ENCODE measurements at regions of chr10 and their contacts with region 1.

Region 1: DNA sequence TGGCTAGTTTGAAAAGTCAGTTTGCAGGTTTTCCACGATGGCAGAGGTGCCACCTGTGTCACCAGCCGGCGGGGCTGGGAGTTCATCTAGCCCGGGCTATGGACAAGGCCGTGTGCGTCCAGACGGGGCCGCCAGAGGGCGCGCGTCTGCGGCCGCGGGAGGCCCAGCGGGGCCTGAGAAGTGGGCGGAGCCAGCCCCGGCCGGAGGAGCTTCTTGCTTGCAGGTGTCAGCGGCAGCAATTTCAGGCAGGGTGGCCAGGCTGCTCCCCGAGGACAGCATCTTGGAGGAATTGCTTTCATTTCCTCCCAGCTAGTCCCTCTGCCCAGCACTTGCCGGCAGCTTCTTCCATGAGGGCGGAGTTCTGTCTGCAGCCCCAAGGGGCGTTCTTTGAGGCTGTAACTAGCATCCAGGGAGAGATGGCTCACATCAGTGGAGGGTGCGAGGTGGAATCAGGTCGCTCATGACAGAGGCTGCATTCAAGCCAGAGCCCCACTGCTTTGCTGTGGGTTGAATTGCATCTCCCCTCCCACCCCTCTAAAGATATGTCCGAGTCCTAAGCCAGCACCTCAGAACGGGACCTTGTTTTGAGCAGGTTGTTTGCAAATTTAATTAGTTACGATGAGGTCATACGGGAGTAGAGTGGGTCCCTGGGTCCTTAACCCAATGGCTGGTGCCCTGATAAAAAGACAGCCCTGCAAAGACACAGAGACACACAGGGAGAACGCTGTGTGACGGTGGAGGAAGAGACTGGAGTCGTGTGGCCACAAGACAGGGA is 85.9 kb upstream of the MKI67 start:
- DNase-seq: peak; percentile 75 to 85 (median 78)
- H3K4me3 ChIP-seq: peak overlapping the region; percentile 47
- H3K4me3 Mint-ChIP-seq: peak overlapping the region; percentile 85 to 93 (median 89)
- H3K27ac ChIP-seq: no peak overlapping the region
- H3K27ac Mint-ChIP-seq: peak overlapping the region; percentile 55 to 91 (median 84)
- H3K4me1 ChIP-seq: peaks cover 5% of the 10 kb centered on the region
- H3K4me1 Mint-ChIP-seq: peaks cover 11 to 21% (median 13%) of the 10 kb centered on the region in 3 donors
- H3K27me3 ChIP-seq: no peaks in the 10 kb centered on the region
- H3K27me3 Mint-ChIP-seq: peaks cover 2 to 5% of the 10 kb centered on the region in 2 donors

Region 2: GRCh38 chr10:128178319-128178958 is 33.7 kb before region 1 on chr10:
- CTCF ChIA-PET with region 1: interaction called, 28 read pairs
- POLR2A ChIA-PET with region 1: no interaction called
- DNase-seq: peak in 4 of 5 donors; percentile 14 to 59 (median 26)
- H3K4me3 ChIP-seq: no peak overlapping the region
- H3K4me3 Mint-ChIP-seq: no peak overlapping the region
- H3K27ac ChIP-seq: no peak overlapping the region
- H3K27ac Mint-ChIP-seq: peak overlapping the region in 2 of 8 donors; percentile 40 to 74
- H3K4me1 ChIP-seq: peaks cover 13% of the 10 kb centered on the region
- H3K4me1 Mint-ChIP-seq: peaks cover 26 to 48% (median 35%) of the 10 kb centered on the region in 3 donors
- H3K27me3 ChIP-seq: no peaks in the 10 kb centered on the region
- H3K27me3 Mint-ChIP-seq: peaks cover 4 to 6% of the 10 kb centered on the region in 2 donors

Region 3: GRCh38 chr10:128186959-128187787 is 25.0 kb before region 1 on chr10:
- CTCF ChIA-PET with region 1: interaction called, 68 read pairs
- POLR2A ChIA-PET with region 1: interaction called, 6 read pairs
- DNase-seq: peak in 4 of 5 donors; percentile 7 to 54 (median 32)
- H3K4me3 ChIP-seq: peak overlapping the region; percentile 59
- H3K4me3 Mint-ChIP-seq: peak overlapping the region; percentile 71 to 91 (median 81)
- H3K27ac ChIP-seq: peak overlapping the region; percentile 27
- H3K27ac Mint-ChIP-seq: peak overlapping the region; percentile 73 to 96 (median 94)
- H3K4me1 ChIP-seq: peaks cover 11% of the 10 kb centered on the region
- H3K4me1 Mint-ChIP-seq: peaks cover 27 to 56% (median 27%) of the 10 kb centered on the region in 3 donors
- H3K27me3 ChIP-seq: no peaks in the 10 kb centered on the region
- H3K27me3 Mint-ChIP-seq: peaks cover 0 to 2% of the 10 kb centered on the region in 2 donors

Region 4: GRCh38 chr10:128222332-128222849 is 10.3 kb after region 1 on chr10:
- CTCF ChIA-PET with region 1: interaction called, 11 read pairs
- POLR2A ChIA-PET with region 1: no interaction called
- DNase-seq: no peak
- H3K4me3 ChIP-seq: no peak overlapping the region
- H3K4me3 Mint-ChIP-seq: no peak overlapping the region
- H3K27ac ChIP-seq: no peak overlapping the region
- H3K27ac Mint-ChIP-seq: peak overlapping the region in 1 of 8 donors; percentile 26
- H3K4me1 ChIP-seq: no peaks in the 10 kb centered on the region
- H3K4me1 Mint-ChIP-seq: peaks cover 4 to 8% (median 5%) of the 10 kb centered on the region in 3 donors
- H3K27me3 ChIP-seq: no peaks in the 10 kb centered on the region
- H3K27me3 Mint-ChIP-seq: peaks cover 17 to 52% of the 10 kb centered on the region in 2 donors

Region 5: GRCh38 chr10:128300290-128300824 is 88.2 kb after region 1 on chr10:
- CTCF ChIA-PET with region 1: no interaction called
- POLR2A ChIA-PET with region 1: no interaction called
- DNase-seq: no peak
- H3K4me3 ChIP-seq: no peak overlapping the region
- H3K4me3 Mint-ChIP-seq: no peak overlapping the region
- H3K27ac ChIP-seq: no peak overlapping the region
- H3K27ac Mint-ChIP-seq: no peak overlapping the region
- H3K4me1 ChIP-seq: no peaks in the 10 kb centered on the region
- H3K4me1 Mint-ChIP-seq: no peaks in the 10 kb centered on the region
- H3K27me3 ChIP-seq: no peaks in the 10 kb centered on the region
- H3K27me3 Mint-ChIP-seq: peaks cover 7 to 9% of the 10 kb centered on the region in 2 donors

Measured in CD8-positive, alpha-beta memory T cell (primary cell).